Naive thymus-derived CD4-positive, alpha-beta T cell (primary cell): ENCODE measurements at regions of chr22 and their contacts with region 1.

Region 1: GRCh38 chr22:39661842-39662676 is 91.5 kb downstream of the CACNA1I start:
- DNase-seq: peak; percentile 75 to 91 (median 88)
- ATAC-seq: peak; percentile 93
- H3K4me3 ChIP-seq: peak overlapping the region; percentile 73
- H3K4me3 Mint-ChIP-seq: peak overlapping the region; percentile 75 to 92 (median 86)
- H3K27ac ChIP-seq: peak overlapping the region; percentile 74
- H3K27ac Mint-ChIP-seq: peak overlapping the region in 7 of 9 donors; percentile 76 to 97 (median 91)
- H3K4me1 ChIP-seq: peaks cover 15 to 58% of the 10 kb centered on the region in 2 donors
- H3K4me1 Mint-ChIP-seq: peaks cover 31 to 77% (median 64%) of the 10 kb centered on the region in 7 donors
- H3K27me3 ChIP-seq: no peaks in the 10 kb centered on the region
- H3K27me3 Mint-ChIP-seq: peaks cover 0 to 25% (median 4%) of the 10 kb centered on the region in 5 donors

Region 2: DNA sequence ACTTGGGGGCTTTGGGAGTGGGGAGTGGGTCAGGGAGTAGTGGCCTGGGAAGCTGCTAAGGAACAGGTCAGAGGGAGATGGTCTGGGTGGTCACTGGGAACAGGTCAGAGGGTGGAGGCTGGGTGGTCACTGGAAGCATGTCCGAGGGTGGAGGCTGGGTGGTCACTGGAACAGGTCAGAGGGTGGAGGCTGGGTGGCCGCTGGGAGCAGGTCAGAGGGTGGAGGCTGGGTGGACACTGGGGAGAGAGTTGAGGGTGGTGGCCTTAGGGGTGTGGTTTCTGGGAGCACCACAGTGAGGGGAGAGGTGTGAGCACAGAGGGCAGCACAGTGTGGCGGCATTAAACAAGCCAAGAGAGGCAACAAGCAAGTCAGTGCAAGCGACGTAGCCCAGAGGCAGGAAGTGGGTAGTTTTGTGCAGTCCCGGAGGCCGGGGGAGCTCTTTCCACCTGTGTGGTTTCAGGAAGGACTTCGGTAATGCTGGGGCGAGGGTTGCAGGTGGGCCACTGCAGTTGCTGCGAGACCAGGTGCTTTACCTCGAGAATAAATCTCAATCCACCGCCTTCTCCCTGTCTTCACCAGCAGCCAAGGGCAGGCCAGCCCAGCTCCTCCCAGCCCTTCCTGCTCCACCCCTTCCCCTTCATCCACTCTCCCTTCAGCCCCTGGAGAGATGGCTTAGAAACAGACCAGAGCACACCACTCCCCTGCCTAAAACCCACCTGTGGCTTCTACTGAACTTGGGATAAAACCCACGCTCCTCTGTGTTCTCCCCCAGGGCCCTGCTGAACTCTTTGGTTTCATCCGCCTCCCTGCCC is 94.7 kb before region 1 on chr22:
- CTCF ChIA-PET with region 1: no interaction called
- POLR2A ChIA-PET with region 1: no interaction called
- intact Hi-C with region 1: loop called in 1 of 2 experiments (anchors 5 kb)
- DNase-seq: peak in 8 of 9 donors; percentile 35 to 67 (median 61)
- ATAC-seq: peak; percentile 87
- H3K4me3 ChIP-seq: peak overlapping the region; percentile 41
- H3K4me3 Mint-ChIP-seq: peak overlapping the region; percentile 32 to 76 (median 62)
- H3K27ac ChIP-seq: no peak overlapping the region
- H3K27ac Mint-ChIP-seq: peak overlapping the region; percentile 67 to 95 (median 77)
- H3K4me1 ChIP-seq: peaks cover 10 to 17% of the 10 kb centered on the region in 2 donors
- H3K4me1 Mint-ChIP-seq: peaks cover 12 to 26% (median 23%) of the 10 kb centered on the region in 7 donors
- H3K27me3 ChIP-seq: no peaks in the 10 kb centered on the region
- H3K27me3 Mint-ChIP-seq: peaks cover 0 to 4% (median 0%) of the 10 kb centered on the region in 5 donors

Region 3: DNA sequence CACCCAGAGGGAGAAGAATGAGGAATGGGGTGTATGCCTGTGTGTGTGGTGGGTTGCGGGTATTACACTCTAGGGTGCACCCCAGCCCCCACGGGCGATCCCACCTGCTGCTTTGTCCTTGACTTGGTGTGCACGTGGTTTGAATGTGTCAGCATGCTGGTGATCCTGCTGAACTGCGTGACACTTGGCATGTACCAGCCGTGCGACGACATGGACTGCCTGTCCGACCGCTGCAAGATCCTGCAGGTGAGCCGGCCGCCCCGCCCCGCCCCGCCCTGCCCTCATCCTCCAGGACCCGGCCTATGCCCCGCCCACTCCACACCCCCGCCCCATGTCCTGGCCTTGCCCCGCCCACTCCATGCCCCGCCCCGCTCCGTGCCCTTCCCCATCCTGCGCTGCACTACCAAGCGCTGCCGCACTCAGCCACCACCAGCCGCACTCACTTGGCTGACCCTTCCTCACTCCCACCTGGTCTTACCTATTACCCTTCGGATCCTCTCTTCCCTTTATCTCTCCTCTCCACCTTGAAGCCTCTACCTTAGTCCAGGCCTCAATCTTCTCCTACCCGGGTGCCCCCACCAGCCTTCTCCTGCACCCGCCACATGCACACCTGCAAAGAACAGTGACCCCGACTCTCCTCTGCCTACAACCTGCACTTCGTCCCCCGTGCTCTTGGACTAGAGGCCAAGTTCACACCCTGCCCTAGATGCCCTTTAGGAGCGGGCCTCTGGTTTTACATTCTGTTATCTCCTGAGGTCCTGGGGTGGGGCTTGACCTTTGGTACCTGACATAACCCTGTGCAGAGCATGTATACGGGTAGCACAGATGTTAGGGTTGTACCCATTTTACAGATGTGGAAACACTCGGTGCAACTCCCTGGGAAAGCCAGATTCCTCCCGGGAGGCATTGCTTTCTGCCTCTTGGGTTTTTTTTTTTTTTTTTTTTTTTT is 63.8 kb before region 1 on chr22:
- CTCF ChIA-PET with region 1: no interaction called
- POLR2A ChIA-PET with region 1: interaction called, 4 read pairs
- intact Hi-C with region 1: loop called in 1 of 2 experiments (anchors 1 kb)
- DNase-seq: peak; percentile 33 to 74 (median 69)
- ATAC-seq: peak; percentile 91
- H3K4me3 ChIP-seq: no peak overlapping the region
- H3K4me3 Mint-ChIP-seq: peak overlapping the region; percentile 27 to 84 (median 52)
- H3K27ac ChIP-seq: no peak overlapping the region
- H3K27ac Mint-ChIP-seq: peak overlapping the region in 2 of 9 donors; percentile 7 to 32
- H3K4me1 ChIP-seq: peaks cover 3 to 25% of the 10 kb centered on the region in 2 donors
- H3K4me1 Mint-ChIP-seq: peaks cover 21 to 51% (median 44%) of the 10 kb centered on the region in 7 donors
- H3K27me3 ChIP-seq: no peaks in the 10 kb centered on the region
- H3K27me3 Mint-ChIP-seq: peaks cover 0 to 32% (median 0%) of the 10 kb centered on the region in 5 donors

Region 4: GRCh38 chr22:39685336-39686177 is 23.5 kb after region 1 on chr22:
- CTCF ChIA-PET with region 1: no interaction called
- POLR2A ChIA-PET with region 1: interaction called, 4 read pairs
- intact Hi-C with region 1: loop called in 1 of 2 experiments (anchors 2 kb)
- DNase-seq: no peak
- ATAC-seq: no peak
- H3K4me3 ChIP-seq: no peak overlapping the region
- H3K4me3 Mint-ChIP-seq: peak overlapping the region in 1 of 10 donors; percentile 33
- H3K27ac ChIP-seq: no peak overlapping the region
- H3K27ac Mint-ChIP-seq: no peak overlapping the region
- H3K4me1 ChIP-seq: no peaks in the 10 kb centered on the region
- H3K4me1 Mint-ChIP-seq: peaks cover 0 to 12% (median 5%) of the 10 kb centered on the region in 7 donors
- H3K27me3 ChIP-seq: no peaks in the 10 kb centered on the region
- H3K27me3 Mint-ChIP-seq: peaks cover 0 to 44% (median 5%) of the 10 kb centered on the region in 5 donors

Region 5: DNA sequence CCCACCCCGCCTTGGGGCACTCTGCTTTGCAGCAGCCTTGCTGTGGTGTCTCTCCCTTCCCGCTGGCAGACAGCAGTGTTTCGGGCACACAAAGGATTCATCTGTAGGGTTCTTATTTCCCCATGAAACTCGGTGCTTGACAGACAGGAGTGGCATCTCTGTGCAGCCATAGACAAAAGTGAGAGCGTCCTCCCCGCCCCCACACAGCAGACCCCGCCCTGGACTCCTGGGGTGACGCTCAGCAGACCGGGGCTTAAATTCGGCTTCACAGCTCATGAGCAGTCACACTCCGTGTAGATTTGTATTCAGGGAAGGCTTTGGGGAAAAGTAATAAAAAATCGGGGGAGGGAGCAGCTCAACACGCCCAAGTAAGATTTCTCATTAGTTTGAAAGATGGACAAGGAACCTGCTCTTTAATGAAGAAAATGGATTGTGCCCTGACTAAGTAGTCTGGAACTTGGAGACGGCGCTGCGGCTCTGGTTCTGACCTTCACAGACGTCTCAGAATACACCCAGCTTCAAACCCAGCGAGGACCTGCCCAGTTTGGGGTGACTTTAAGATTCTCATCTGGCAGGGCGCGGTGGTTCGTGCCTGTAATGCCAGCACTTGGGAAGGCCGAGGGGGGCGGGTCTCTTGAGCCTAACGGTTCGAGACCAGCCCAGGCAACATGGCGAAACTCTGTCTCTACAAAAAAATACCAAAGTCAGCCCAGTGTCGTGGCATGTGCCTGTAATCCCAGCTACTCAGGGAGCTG is 44.5 kb after region 1 on chr22:
- CTCF ChIA-PET with region 1: no interaction called
- POLR2A ChIA-PET with region 1: no interaction called
- intact Hi-C with region 1: no loop called
- DNase-seq: no peak
- ATAC-seq: no peak
- H3K4me3 ChIP-seq: no peak overlapping the region
- H3K4me3 Mint-ChIP-seq: no peak overlapping the region
- H3K27ac ChIP-seq: no peak overlapping the region
- H3K27ac Mint-ChIP-seq: no peak overlapping the region
- H3K4me1 ChIP-seq: no peaks in the 10 kb centered on the region
- H3K4me1 Mint-ChIP-seq: peaks cover 0 to 2% (median 0%) of the 10 kb centered on the region in 7 donors
- H3K27me3 ChIP-seq: no peaks in the 10 kb centered on the region
- H3K27me3 Mint-ChIP-seq: peaks cover 0 to 9% (median 0%) of the 10 kb centered on the region in 5 donors

Region 6: DNA sequence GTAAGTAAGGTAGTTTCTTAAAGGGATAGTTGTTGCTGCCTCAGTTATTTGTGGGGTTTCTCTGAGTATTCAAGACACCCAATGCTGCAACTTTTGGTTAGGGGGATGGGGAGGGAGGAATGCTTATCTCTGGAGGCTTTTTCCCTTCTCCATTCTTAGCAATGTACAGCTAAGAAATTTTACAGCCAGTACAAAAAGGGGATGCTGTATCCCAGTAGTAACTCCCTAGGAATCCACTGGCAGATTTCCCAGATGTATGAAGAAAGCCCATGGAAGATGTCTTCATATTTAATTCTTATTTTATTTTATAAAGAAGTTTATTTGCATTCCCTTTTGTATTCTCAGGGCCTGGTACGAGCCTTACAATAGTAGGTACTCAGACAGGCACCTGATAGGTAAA is 76.7 kb after region 1 on chr22:
- CTCF ChIA-PET with region 1: no interaction called
- POLR2A ChIA-PET with region 1: no interaction called
- intact Hi-C with region 1: no loop called
- DNase-seq: no peak
- ATAC-seq: no peak
- H3K4me3 ChIP-seq: no peak overlapping the region
- H3K4me3 Mint-ChIP-seq: no peak overlapping the region
- H3K27ac ChIP-seq: no peak overlapping the region
- H3K27ac Mint-ChIP-seq: no peak overlapping the region
- H3K4me1 ChIP-seq: no peaks in the 10 kb centered on the region
- H3K4me1 Mint-ChIP-seq: peaks cover 0 to 7% (median 0%) of the 10 kb centered on the region in 7 donors
- H3K27me3 ChIP-seq: no peaks in the 10 kb centered on the region
- H3K27me3 Mint-ChIP-seq: peaks cover 0 to 36% (median 5%) of the 10 kb centered on the region in 5 donors

Region 7: DNA sequence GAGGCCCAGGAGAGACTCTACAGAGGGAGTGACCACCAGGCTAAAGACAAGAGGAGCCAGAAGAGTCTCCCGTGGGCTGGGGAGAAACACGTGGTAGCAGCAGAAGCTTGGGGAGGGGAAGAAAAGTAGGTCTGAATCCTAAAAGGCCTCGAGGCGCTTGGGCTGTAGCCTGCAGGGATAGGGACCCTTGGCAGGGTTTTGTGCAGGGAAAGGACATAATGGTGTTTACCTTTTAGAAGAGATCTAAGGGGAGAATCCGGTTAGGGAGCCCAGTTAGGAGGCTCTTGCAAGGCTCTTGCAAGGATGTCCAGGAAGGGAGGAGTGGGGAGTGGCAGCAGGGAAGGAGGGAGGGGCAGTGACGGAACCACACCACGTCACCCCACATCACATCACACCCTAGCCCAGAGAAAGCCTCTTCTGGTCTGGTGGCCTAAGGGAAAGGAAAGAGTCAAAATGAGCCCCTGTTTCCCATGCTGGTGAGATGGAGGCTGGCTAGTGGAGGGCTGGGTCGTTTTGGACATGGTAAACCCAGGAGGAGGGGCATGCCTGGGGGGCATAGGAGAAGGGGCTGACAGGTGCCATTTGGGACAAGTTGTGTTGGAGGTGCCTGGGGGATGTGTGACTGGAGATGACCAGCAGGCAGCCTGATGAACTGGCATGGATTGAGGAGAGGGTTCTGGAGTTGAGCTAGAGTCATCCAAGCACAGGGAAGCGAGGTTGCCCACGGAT is 326.5 kb after region 1 on chr22:
- CTCF ChIA-PET with region 1: no interaction called
- POLR2A ChIA-PET with region 1: no interaction called
- intact Hi-C with region 1: no loop called
- DNase-seq: no peak
- ATAC-seq: no peak
- H3K4me3 ChIP-seq: no peak overlapping the region
- H3K4me3 Mint-ChIP-seq: peak overlapping the region in 5 of 10 donors; percentile 22 to 66 (median 53)
- H3K27ac ChIP-seq: no peak overlapping the region
- H3K27ac Mint-ChIP-seq: peak overlapping the region in 5 of 9 donors; percentile 44 to 80 (median 74)
- H3K4me1 ChIP-seq: peaks cover 0 to 10% of the 10 kb centered on the region in 2 donors
- H3K4me1 Mint-ChIP-seq: peaks cover 10 to 27% (median 19%) of the 10 kb centered on the region in 7 donors
- H3K27me3 ChIP-seq: no peaks in the 10 kb centered on the region
- H3K27me3 Mint-ChIP-seq: peaks cover 0 to 35% (median 0%) of the 10 kb centered on the region in 5 donors